Cardiac septum (tissue), 1 donor: ENCODE measurements at regions of chr11 and their contacts with region 1.

Region 1: GRCh38 chr11:67317205-67317887 is 14.0 kb downstream of the SSH3 start:
- DNase-seq: peak; percentile 98

Region 2: GRCh38 chr11:67082035-67082791 is 235.1 kb before region 1 on chr11:
- intact Hi-C with region 1: loop called (anchors 10 kb)
- DNase-seq: no peak

Region 3: DNA sequence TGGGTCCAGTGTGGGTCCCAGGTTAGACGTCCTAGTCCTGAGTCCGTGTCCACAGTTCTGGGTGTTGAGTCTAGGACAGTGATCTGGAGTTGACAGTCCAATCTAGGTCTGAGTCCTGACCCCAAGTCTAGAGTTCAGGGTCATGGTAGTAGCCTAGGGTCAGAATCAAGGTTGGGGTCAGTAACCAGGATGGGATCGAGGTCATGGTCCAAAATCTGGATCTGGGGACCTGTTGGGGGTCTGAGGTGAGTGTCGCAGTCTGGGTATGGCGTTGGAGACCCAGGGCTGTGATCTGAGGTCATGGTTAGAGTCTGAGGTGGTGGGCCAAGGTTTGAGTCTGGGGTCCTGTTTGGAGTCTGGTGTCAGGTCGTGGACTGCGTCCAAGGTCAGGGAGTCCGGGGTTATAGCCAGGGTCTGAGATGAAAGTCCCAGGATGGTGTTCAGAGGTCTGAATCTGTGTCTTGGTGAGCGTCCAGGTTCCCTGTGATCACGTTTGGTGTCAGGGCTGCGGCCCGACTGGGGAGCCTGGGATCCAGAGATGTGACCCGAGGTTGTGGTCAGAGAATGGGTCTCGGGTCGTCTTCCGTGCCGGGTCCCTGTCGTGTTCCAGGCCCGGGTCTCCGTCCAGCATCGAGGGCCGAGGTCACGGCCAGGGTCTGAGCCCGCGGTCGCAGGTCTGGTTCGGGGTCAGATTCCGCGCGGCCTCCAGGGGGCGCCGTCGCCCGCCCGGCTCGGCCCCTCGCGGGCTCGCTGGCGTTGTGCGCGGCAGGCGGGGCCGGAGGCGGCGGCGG is 51.5 kb before region 1 on chr11:
- intact Hi-C with region 1: loop called (anchors 1 kb)
- DNase-seq: peak; percentile 93

Region 4: GRCh38 chr11:67288452-67289225 is 28.7 kb before region 1 on chr11:
- intact Hi-C with region 1: loop called (anchors 2 kb)
- DNase-seq: peak; percentile 96

Region 5: GRCh38 chr11:67303132-67303834 is 14.1 kb before region 1 on chr11 and contains the start of gene SSH3:
- intact Hi-C with region 1: loop called (anchors 2 kb)
- DNase-seq: peak; percentile 94
- total RNA-seq, gene SSH3: 22.3 TPM

Region 6: GRCh38 chr11:67353317-67354074 is 36.1 kb after region 1 on chr11 and contains the start of gene POLD4:
- intact Hi-C with region 1: loop called (anchors 1 kb)
- DNase-seq: peak; percentile 100
- total RNA-seq, gene POLD4: 61.6 TPM